SK-N-SH (cell line): ENCODE measurements at regions of chr9 and their contacts with region 1.

Region 1: GRCh38 chr9:129884220-129885017 is 49.2 kb downstream of the USP20 start:
- DNase-seq: peak; percentile 93
- H3K4me3 ChIP-seq: peak overlapping the region in 1 of 2 experiments; percentile 13; a peak in 1 of 4 replicates
- H3K27ac ChIP-seq: peak overlapping the region; percentile 54 to 88; a peak in 3 of 4 replicates
- H3K4me1 ChIP-seq: peaks cover 34 to 47% of the 10 kb centered on the region in 2 experiments; a peak in 3 of 4 replicates
- H3K27me3 ChIP-seq: no peaks in the 10 kb centered on the region
- CTCF ChIP-seq: no peak
- EP300 ChIP-seq: no peak
- RAD21 ChIP-seq: peak; percentile 35; the same call in 1 of the 2 replicates

Region 2: DNA sequence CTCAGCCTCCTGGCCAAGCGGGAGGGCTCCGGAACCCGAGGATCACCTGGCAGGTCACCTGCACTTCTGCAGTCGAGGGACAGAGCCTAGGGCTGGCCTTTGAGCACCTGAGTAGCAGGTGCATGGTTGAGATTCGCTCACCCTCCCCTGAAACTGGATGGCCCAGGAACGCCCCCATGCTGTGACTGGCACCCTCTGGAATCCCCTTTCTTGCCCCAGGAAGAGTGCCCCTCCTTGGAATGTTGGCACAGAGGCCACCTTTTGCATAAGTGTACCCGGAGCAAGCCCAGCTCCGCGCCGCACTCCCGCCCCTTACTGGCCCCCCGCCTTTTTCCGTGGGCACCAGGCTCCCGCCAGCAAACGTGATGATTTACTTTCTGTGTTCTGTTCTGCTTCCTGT is 593.8 kb before region 1 on chr9:
- CTCF ChIA-PET with region 1: no interaction called
- POLR2A ChIA-PET with region 1: no interaction called
- DNase-seq: no peak
- H3K4me3 ChIP-seq: no peak overlapping the region
- H3K27ac ChIP-seq: no peak overlapping the region
- H3K4me1 ChIP-seq: no peaks in the 10 kb centered on the region
- H3K27me3 ChIP-seq: no peaks in the 10 kb centered on the region
- CTCF ChIP-seq: no peak
- EP300 ChIP-seq: no peak
- RAD21 ChIP-seq: no peak

Region 3: DNA sequence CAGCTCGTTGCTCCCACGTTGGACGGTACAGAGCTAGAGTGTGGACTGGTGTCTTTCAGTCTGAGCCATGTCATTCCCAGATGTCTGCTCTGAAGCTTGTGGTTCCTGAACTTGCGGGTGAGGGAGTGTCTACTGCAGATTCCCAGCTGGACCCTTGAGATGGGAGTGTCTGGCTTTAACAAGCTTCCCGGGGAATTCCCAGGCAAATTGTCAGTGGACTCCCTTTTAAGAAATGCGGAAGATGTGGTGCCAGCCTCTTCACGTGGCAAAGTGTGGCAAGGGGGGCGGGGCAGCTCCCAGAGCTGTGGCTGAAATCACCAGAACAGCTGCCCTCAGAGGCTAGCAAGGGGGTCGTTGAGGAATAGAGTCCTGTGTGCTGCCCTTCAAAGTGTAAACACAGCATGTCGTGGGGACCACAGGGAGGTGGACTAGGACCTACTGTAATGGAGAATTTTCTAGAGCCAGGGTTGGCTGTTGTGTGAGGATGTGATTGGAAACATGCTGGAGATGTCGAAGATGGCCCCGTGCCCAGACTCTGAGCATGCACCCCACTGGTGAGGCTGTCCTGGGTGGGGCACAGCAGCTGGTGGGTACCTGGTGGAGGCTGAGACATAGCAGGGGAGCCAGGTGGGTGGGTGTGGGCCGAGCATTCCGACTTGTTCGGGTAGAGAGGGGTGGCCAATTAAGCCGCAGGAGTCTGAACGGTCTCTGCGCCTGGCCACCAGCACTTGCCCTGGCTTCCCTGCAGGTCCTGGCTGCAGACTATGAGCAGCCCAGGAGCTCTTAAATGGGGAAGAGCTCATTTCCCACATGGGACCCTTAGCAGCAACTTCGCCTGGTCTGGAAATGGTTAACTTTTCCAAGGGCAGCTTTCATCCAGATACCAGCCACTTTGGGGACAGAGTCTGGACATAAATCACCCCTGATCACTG is 181.6 kb before region 1 on chr9:
- CTCF ChIA-PET with region 1: no interaction called
- POLR2A ChIA-PET with region 1: no interaction called
- DNase-seq: no peak
- H3K4me3 ChIP-seq: no peak overlapping the region
- H3K27ac ChIP-seq: no peak overlapping the region
- H3K4me1 ChIP-seq: peaks cover 0 to 36% of the 10 kb centered on the region in 2 experiments; a peak in 2 of 4 replicates
- H3K27me3 ChIP-seq: no peaks in the 10 kb centered on the region
- CTCF ChIP-seq: no peak
- EP300 ChIP-seq: no peak
- RAD21 ChIP-seq: no peak

Region 4: GRCh38 chr9:129746092-129746777 is 138.2 kb before region 1 on chr9:
- CTCF ChIA-PET with region 1: no interaction called
- POLR2A ChIA-PET with region 1: no interaction called
- DNase-seq: no peak
- H3K4me3 ChIP-seq: no peak overlapping the region
- H3K27ac ChIP-seq: no peak overlapping the region
- H3K4me1 ChIP-seq: no peaks in the 10 kb centered on the region
- H3K27me3 ChIP-seq: no peaks in the 10 kb centered on the region
- CTCF ChIP-seq: no peak
- EP300 ChIP-seq: no peak
- RAD21 ChIP-seq: no peak

Region 5: GRCh38 chr9:129854588-129855110 is 29.8 kb before region 1 on chr9:
- CTCF ChIA-PET with region 1: no interaction called
- POLR2A ChIA-PET with region 1: no interaction called
- DNase-seq: no peak
- H3K4me3 ChIP-seq: no peak overlapping the region
- H3K27ac ChIP-seq: no peak overlapping the region; a peak in 1 of 4 replicates
- H3K4me1 ChIP-seq: peaks cover 0 to 30% of the 10 kb centered on the region in 2 experiments; a peak in 2 of 4 replicates
- H3K27me3 ChIP-seq: no peaks in the 10 kb centered on the region
- CTCF ChIP-seq: no peak
- EP300 ChIP-seq: no peak
- RAD21 ChIP-seq: no peak

Region 6: DNA sequence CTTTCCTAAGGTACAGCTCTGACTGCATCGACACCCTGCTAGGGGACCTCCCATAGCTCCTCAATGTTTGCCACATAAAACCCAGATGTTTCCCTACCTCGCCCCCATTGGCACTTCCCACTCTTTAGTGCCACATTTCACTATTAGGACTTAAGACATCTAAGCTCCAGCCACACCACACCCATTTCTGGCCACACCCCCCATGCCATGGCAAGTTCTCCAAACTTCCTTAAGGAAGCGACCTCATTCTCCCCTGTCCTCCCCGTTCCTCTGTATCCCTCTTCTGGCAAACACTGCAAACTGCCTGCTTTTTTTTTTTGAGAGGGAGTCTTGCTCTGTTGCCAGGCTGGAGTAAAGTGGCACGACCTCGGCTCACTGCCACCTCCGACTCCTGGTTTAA is 13.8 kb after region 1 on chr9:
- CTCF ChIA-PET with region 1: interaction called, 13 read pairs
- POLR2A ChIA-PET with region 1: no interaction called
- DNase-seq: no peak
- H3K4me3 ChIP-seq: no peak overlapping the region
- H3K27ac ChIP-seq: no peak overlapping the region
- H3K4me1 ChIP-seq: no peaks in the 10 kb centered on the region
- H3K27me3 ChIP-seq: no peaks in the 10 kb centered on the region
- CTCF ChIP-seq: peak; percentile 8; the same call in 1 of the 2 replicates
- EP300 ChIP-seq: no peak
- RAD21 ChIP-seq: no peak

Region 7: GRCh38 chr9:129910628-129911567 is 26.5 kb after region 1 on chr9:
- CTCF ChIA-PET with region 1: interaction called, 10 read pairs
- POLR2A ChIA-PET with region 1: no interaction called
- DNase-seq: no peak
- H3K4me3 ChIP-seq: no peak overlapping the region
- H3K27ac ChIP-seq: peak overlapping the region in 1 of 2 experiments; percentile 70; a peak in 2 of 4 replicates
- H3K4me1 ChIP-seq: peaks cover 0 to 7% of the 10 kb centered on the region in 2 experiments; a peak in 2 of 4 replicates
- H3K27me3 ChIP-seq: no peaks in the 10 kb centered on the region
- CTCF ChIP-seq: no peak
- EP300 ChIP-seq: peak; percentile 19 to 86; a peak in 1 of 4 replicates
- RAD21 ChIP-seq: no peak

Region 8: GRCh38 chr9:130042406-130042832 is 158.0 kb after region 1 on chr9:
- CTCF ChIA-PET with region 1: interaction called, 23 read pairs
- POLR2A ChIA-PET with region 1: interaction called, 4 read pairs
- DNase-seq: peak; percentile 80
- H3K4me3 ChIP-seq: peak overlapping the region; percentile 81 to 85
- H3K27ac ChIP-seq: peak overlapping the region; percentile 72 to 77
- H3K4me1 ChIP-seq: peaks cover 12 to 16% of the 10 kb centered on the region in 2 experiments; a peak in 3 of 4 replicates
- H3K27me3 ChIP-seq: no peaks in the 10 kb centered on the region
- CTCF ChIP-seq: no peak
- EP300 ChIP-seq: no peak
- RAD21 ChIP-seq: no peak

Region 9: DNA sequence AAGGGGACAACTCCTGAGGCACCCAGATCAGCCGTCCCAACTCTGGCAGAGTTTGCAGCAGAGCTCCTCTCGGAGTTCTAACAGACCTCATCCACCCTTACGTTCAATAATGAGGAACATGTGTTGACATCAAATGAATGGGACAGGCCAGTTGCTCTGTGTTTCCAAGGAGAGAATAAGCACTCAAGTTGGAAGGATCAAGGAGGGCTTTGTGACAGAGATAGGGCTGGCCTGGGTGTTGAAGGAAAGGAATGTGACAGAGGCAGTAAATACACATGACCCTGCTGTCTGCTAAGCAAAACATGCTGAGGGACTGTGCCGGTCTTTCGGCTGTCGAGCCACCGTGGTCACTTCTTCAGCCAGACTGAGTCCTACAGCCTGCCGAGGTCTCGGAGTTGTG is 217.5 kb after region 1 on chr9:
- CTCF ChIA-PET with region 1: interaction called, 16 read pairs
- POLR2A ChIA-PET with region 1: no interaction called
- DNase-seq: no peak
- H3K4me3 ChIP-seq: no peak overlapping the region
- H3K27ac ChIP-seq: no peak overlapping the region
- H3K4me1 ChIP-seq: no peaks in the 10 kb centered on the region
- H3K27me3 ChIP-seq: no peaks in the 10 kb centered on the region
- CTCF ChIP-seq: no peak
- EP300 ChIP-seq: no peak
- RAD21 ChIP-seq: no peak